BJ (cell line): ENCODE measurements at regions of chr7 and their contacts with region 1.

Region 1: GRCh38 chr7:31373337-31374289 is 33.1 kb upstream of the NEUROD6 start:
- DNase-seq: no peak
- H3K4me3 ChIP-seq: no peak overlapping the region
- H3K27me3 ChIP-seq: no peaks in the 10 kb centered on the region
- CTCF ChIP-seq: peak; percentile 71

Region 2: GRCh38 chr7:31362401-31362800 is 11.2 kb before region 1 on chr7:
- CTCF ChIA-PET with region 1: interaction called, 11 read pairs
- POLR2A ChIA-PET with region 1: no interaction called
- DNase-seq: no peak
- H3K4me3 ChIP-seq: no peak overlapping the region
- H3K27me3 ChIP-seq: no peaks in the 10 kb centered on the region
- CTCF ChIP-seq: no peak

Region 3: GRCh38 chr7:31633894-31634494 is 260.4 kb after region 1 on chr7:
- CTCF ChIA-PET with region 1: interaction called, 12 read pairs
- POLR2A ChIA-PET with region 1: no interaction called
- DNase-seq: peak; percentile 11
- H3K4me3 ChIP-seq: no peak overlapping the region
- H3K27me3 ChIP-seq: no peaks in the 10 kb centered on the region
- CTCF ChIP-seq: peak; percentile 54